ENCODE measurements at regions of chr19 and their contacts with region 1.

Region 1: GRCh38 chr19:43747557-43748204 is 7.1 kb downstream of the SMG9 start:
- DNase-seq: no peak
- ATAC-seq: no peak
- H3K4me3 Mint-ChIP-seq: no peak overlapping the region
- H3K27ac Mint-ChIP-seq: peak overlapping the region; percentile 50
- H3K4me1 Mint-ChIP-seq: peaks cover 16% of the 10 kb centered on the region
- H3K27me3 Mint-ChIP-seq: no peaks in the 10 kb centered on the region

Region 2: GRCh38 chr19:43441716-43442115 is 306.0 kb before region 1 on chr19:
- CTCF ChIA-PET with region 1: no interaction called
- POLR2A ChIA-PET with region 1: no interaction called
- DNase-seq: no peak
- ATAC-seq: no peak
- H3K4me3 Mint-ChIP-seq: no peak overlapping the region
- H3K27ac Mint-ChIP-seq: no peak overlapping the region
- H3K4me1 Mint-ChIP-seq: peaks cover 43% of the 10 kb centered on the region
- H3K27me3 Mint-ChIP-seq: no peaks in the 10 kb centered on the region

Region 3: DNA sequence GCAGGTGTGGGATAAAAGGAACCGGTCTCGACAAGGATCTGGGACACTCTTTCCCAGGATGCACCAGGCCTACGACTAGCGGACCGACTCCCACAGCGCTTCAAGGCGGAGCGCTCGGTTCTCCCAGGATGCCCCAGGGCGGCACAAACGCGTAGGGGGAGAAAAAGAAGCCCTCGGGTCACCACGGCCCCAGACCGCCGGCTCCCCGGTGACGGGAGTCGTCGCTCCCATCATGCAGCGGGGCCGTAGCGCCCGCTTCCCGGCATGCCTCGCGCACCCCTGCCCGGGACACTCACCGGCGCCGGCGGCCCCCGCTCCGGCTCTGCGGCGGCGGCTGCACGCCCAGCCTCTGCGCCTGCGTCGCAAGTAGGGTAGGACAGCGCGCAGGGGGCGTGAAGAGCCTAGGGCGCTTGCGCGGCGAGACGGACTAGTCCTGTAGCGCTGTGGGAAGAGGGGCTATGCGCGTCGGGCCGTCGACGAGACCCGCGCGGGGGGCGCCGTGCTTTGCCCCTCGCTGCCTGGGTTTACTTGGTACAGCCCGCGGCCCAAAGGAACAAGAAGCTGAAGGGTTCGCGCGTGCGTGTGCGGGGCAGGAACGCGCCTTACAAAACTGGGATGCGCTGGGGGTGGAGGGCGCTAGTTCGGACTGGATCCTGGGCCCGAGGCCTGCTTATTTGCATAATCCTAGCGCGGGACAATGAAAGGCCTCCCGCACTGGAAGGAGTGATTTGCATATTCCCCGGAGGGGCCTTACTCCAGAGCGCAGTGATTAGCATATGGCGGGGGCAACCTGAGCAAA is 128.2 kb before region 1 on chr19 and contains the start of gene ZNF428:
- CTCF ChIA-PET with region 1: no interaction called
- POLR2A ChIA-PET with region 1: no interaction called
- DNase-seq: peak; percentile 84
- ATAC-seq: peak; percentile 92
- H3K4me3 Mint-ChIP-seq: peak within 1 kb of the TSS; percentile 94
- H3K27ac Mint-ChIP-seq: peak within 1 kb of the TSS; percentile 98
- H3K4me1 Mint-ChIP-seq: peaks cover 24% of the 10 kb centered on the region
- H3K27me3 Mint-ChIP-seq: no peaks in the 10 kb centered on the region
- total RNA-seq, gene ZNF428: 29.9 to 31.5 TPM

Region 4: GRCh38 chr19:43777163-43777700 is 29.6 kb after region 1 on chr19:
- CTCF ChIA-PET with region 1: interaction called, 15 read pairs
- POLR2A ChIA-PET with region 1: interaction called, 52 read pairs
- DNase-seq: peak; percentile 37
- ATAC-seq: peak; percentile 28
- H3K4me3 Mint-ChIP-seq: peak overlapping the region; percentile 61
- H3K27ac Mint-ChIP-seq: peak overlapping the region; percentile 91
- H3K4me1 Mint-ChIP-seq: peaks cover 55% of the 10 kb centered on the region
- H3K27me3 Mint-ChIP-seq: no peaks in the 10 kb centered on the region

Region 5: GRCh38 chr19:43784981-43785808 is 37.5 kb after region 1 on chr19:
- CTCF ChIA-PET with region 1: interaction called, 34 read pairs
- POLR2A ChIA-PET with region 1: interaction called, 52 read pairs
- DNase-seq: peak; percentile 75
- ATAC-seq: peak; percentile 55
- H3K4me3 Mint-ChIP-seq: peak overlapping the region; percentile 16
- H3K27ac Mint-ChIP-seq: peak overlapping the region; percentile 89
- H3K4me1 Mint-ChIP-seq: peaks cover 43% of the 10 kb centered on the region
- H3K27me3 Mint-ChIP-seq: no peaks in the 10 kb centered on the region

Region 6: GRCh38 chr19:43809762-43810696 is 62.3 kb after region 1 on chr19:
- CTCF ChIA-PET with region 1: interaction called, 23 read pairs
- POLR2A ChIA-PET with region 1: no interaction called
- DNase-seq: no peak
- ATAC-seq: peak; percentile 57
- H3K4me3 Mint-ChIP-seq: no peak overlapping the region
- H3K27ac Mint-ChIP-seq: no peak overlapping the region
- H3K4me1 Mint-ChIP-seq: no peaks in the 10 kb centered on the region
- H3K27me3 Mint-ChIP-seq: peaks cover 12% of the 10 kb centered on the region

Measured in activated CD8-positive, alpha-beta T cell treated with anti-CD3 and anti-CD28 coated beads, Interleukin-2, amount 10 ng/mL, durations not matched to agents 7 days and 5 days (primary cell).